Activated CD8-positive, alpha-beta memory T cell treated with anti-CD3 and anti-CD28 coated beads, Interleukin-2, amount 10 ng/mL, durations not matched to agents 7 days and 5 days (primary cell): ENCODE measurements at regions of chr5 and their contacts with region 1.

Region 1: GRCh38 chr5:151740336-151740942 is 18.0 kb downstream of the ATOX1 start:
- DNase-seq: peak; percentile 65
- ATAC-seq: peak; percentile 63
- H3K4me3 Mint-ChIP-seq: no peak overlapping the region
- H3K27ac Mint-ChIP-seq: no peak overlapping the region
- H3K4me1 Mint-ChIP-seq: peaks cover 18% of the 10 kb centered on the region
- H3K27me3 Mint-ChIP-seq: no peaks in the 10 kb centered on the region

Region 2: DNA sequence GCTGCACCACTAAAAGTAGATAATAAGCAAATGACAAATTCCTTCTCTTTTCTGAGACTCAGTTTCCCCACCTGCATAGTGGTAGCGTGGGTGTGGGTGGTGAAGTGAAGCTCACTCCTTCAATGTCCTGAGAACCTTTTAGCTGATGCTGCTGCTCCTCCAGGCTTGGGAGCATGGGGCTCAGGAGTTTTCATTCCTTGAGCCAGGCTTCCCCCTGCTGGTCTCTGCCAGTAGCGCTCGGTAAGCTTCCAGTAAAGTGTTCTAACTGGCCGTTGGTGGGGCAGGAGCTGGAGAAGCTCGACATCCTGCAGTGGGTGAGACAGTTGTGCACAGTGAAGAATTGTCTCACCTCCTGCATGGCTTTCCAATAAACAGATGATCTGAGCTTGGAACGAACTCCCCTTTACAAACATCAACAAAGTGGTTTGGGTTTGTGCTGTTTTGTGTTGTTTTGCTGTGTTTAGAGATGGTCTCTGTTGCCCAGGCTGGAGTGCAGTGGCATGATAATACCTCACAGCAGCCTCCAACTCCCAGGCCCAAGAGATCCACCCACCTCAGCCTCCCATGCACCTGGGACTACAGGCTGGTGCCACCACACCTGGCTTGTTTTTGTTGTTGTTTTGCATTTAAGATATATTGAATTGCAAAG is 88.3 kb before region 1 on chr5:
- CTCF ChIA-PET with region 1: interaction called, 72 read pairs
- DNase-seq: peak; percentile 79
- ATAC-seq: peak; percentile 98
- H3K4me3 Mint-ChIP-seq: no peak overlapping the region
- H3K27ac Mint-ChIP-seq: no peak overlapping the region
- H3K4me1 Mint-ChIP-seq: no peaks in the 10 kb centered on the region
- H3K27me3 Mint-ChIP-seq: peaks cover 18% of the 10 kb centered on the region

Region 3: GRCh38 chr5:151703227-151703626 is 37.2 kb before region 1 on chr5:
- CTCF ChIA-PET with region 1: no interaction called
- DNase-seq: no peak
- ATAC-seq: no peak
- H3K4me3 Mint-ChIP-seq: no peak overlapping the region
- H3K27ac Mint-ChIP-seq: no peak overlapping the region
- H3K4me1 Mint-ChIP-seq: no peaks in the 10 kb centered on the region
- H3K27me3 Mint-ChIP-seq: peaks cover 2% of the 10 kb centered on the region

Region 4: DNA sequence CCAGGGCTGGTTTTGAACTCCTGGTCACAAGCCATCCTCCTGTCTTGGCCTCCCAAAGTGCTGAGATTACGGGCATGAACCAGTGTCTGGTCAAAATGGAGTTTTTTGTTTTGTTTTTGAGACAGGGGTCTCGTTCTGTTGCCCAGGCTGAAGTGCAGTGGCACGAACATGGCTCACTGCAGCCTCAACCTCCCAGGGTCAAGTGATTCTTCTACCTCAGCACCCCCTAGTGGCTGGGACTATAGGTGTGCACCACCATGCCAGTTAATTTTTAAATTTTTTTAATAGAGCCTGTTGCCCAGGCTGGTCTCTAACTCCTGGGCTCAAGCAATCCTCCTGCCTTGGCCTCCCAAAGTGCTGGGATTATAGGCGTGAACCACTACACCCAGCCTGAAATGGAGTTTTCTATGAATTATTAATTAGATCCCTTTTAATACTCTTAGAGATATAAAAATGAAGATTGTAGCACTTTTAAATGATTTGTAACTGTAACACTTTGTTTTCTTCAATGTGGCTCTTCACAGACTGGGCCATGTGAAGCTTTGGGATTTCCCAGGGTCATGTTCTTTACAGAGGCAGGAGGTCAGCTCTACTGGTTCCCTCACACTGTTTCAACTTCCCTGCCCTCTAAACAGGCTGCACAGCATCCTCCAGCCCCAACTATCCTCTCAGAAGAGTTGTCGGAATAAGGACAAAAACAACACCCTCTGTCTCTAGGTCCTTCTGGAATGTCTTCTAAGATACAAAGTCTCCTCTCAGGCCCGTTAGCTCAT is 21.0 kb before region 1 on chr5:
- CTCF ChIA-PET with region 1: interaction called, 24 read pairs
- DNase-seq: peak; percentile 49
- ATAC-seq: no peak
- H3K4me3 Mint-ChIP-seq: no peak overlapping the region
- H3K27ac Mint-ChIP-seq: no peak overlapping the region
- H3K4me1 Mint-ChIP-seq: peaks cover 17% of the 10 kb centered on the region
- H3K27me3 Mint-ChIP-seq: no peaks in the 10 kb centered on the region

Region 5: DNA sequence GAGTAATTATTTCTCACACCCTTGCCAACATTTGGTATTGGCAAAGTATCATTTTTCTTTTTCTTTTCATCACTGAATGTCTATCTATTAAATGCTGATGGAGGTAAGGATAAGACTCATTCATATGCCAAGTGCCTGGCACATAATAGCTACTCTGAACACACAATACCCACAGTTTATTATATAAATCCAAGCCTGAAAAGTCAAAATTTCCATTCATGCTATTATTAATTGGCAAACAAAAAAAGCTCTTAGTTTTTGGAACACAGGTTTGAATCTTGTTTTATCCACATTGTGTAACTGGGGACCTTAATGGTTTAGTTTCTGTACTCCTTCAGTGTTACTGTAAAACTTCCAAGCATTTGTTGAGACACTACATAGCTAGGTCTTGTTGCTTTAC is 24.4 kb after region 1 on chr5:
- CTCF ChIA-PET with region 1: interaction called, 10 read pairs
- DNase-seq: no peak
- ATAC-seq: no peak
- H3K4me3 Mint-ChIP-seq: no peak overlapping the region
- H3K27ac Mint-ChIP-seq: no peak overlapping the region
- H3K4me1 Mint-ChIP-seq: peaks cover 3% of the 10 kb centered on the region
- H3K27me3 Mint-ChIP-seq: no peaks in the 10 kb centered on the region